ENCODE measurements at regions of chr13 and their contacts with region 1.

Region 1: GRCh38 chr13:36346222-36347083 is at the start of gene SPART:
- DNase-seq: peak; percentile 98
- H3K4me3 ChIP-seq: peak within 1 kb of the TSS; percentile 79 to 88 (median 86)
- H3K27ac ChIP-seq: peak within 1 kb of the TSS; percentile 98 to 99 (median 99)
- H3K4me1 ChIP-seq: peaks cover 5 to 45% (median 38%) of the 10 kb centered on the region in 4 donors
- H3K27me3 ChIP-seq: no peaks in the 10 kb centered on the region
- CTCF ChIP-seq: peak; percentile 98 to 99 (median 98)
- EP300 ChIP-seq: no peak
- POLR2A ChIP-seq: peak; percentile 25
- total RNA-seq, gene SPART: 95.1 to 157 (median 122) TPM

Region 2: DNA sequence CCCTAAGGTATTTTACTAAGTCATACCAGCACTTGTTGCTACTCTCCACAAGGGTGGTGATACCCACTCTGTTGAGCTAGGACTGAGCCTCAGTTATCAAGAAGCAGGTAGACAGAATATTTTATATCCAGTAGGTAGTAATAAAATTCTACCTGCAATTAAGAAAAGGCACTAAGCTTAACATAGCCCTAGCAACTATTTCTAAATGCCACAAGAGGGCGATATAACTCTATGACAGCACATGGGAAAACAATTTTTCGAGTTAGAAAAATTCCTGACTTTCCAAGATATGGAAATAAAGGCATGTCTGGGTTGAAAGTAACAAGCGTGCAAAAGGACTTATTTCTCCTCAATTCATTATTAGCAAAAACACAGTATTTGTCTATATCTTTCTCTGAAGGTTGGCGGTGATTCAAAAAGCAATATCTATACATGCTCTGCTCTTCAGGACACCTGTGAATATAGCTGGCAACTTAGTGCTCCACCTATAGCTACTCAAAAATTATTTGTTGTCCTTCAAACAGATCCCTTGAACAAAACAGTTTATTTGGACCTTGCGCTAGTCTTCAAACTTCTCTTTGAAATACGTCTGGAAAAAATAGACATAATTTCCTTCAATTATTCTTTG is 63.5 kb before region 1 on chr13:
- intact Hi-C with region 1: loop called (anchors 5 kb)
- DNase-seq: no peak
- H3K4me3 ChIP-seq: no peak overlapping the region
- H3K27ac ChIP-seq: no peak overlapping the region
- H3K4me1 ChIP-seq: peaks cover 0 to 9% (median 0%) of the 10 kb centered on the region in 4 donors
- H3K27me3 ChIP-seq: no peaks in the 10 kb centered on the region
- CTCF ChIP-seq: peak; percentile 76 to 86 (median 86)
- EP300 ChIP-seq: no peak
- POLR2A ChIP-seq: no peak

Region 3: DNA sequence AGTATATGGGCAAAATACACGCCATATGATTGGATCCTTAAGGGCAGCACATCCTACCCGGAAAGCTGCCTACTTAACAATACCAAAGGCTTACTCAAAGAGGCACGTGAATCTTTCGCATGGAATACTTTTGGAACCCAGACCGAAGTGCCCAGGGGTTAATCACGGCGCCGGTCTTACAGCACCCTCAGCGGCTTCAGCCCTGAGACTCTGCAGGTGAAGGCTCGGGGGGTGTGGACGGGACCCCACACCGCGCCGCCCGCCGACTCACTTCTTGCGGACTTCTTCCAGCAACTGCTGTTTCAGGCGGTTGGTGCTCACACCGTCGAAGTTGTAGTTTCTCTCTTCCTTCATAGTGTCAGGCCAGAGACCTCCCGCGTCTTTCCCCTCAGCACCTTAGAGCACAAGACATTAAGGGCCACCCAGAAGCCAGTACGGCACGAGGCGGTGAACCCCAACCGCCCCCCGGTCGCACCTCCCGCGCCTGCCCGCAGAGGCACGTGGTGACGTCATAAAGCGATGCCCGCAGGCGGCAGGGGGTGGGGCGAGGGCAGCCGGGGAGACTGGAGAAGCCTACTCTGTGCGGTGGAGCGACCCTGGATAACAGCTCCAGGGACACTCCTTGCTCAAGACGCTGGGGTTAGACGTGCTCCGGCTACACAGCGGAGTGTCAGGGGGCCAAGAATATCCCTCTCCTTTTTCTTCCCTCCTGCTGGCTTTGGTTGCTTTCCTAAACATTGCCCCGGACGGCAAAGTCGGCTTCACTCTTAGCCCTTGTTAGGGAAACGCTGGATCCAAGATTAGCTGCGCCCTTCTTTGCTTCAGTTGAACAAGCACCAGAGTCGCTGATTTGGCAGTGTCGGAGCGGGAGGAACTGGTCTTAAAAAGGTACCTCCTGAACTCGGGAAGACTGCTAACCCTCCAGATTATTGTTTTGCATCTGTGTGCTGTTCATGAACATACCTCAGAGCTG is 48.8 kb before region 1 on chr13 and contains the start of gene CCDC169:
- intact Hi-C with region 1: loop called (anchors 5 kb)
- DNase-seq: no peak
- H3K4me3 ChIP-seq: peak within 1 kb of the TSS; percentile 62 to 76 (median 69)
- H3K27ac ChIP-seq: peak within 1 kb of the TSS; percentile 73 to 87 (median 80)
- H3K4me1 ChIP-seq: peaks cover 5 to 20% (median 10%) of the 10 kb centered on the region in 4 donors
- H3K27me3 ChIP-seq: no peaks in the 10 kb centered on the region
- CTCF ChIP-seq: no peak
- EP300 ChIP-seq: no peak
- POLR2A ChIP-seq: no peak
- total RNA-seq, gene CCDC169: 0.42 to 1.6 (median 0.84) TPM

Region 4: DNA sequence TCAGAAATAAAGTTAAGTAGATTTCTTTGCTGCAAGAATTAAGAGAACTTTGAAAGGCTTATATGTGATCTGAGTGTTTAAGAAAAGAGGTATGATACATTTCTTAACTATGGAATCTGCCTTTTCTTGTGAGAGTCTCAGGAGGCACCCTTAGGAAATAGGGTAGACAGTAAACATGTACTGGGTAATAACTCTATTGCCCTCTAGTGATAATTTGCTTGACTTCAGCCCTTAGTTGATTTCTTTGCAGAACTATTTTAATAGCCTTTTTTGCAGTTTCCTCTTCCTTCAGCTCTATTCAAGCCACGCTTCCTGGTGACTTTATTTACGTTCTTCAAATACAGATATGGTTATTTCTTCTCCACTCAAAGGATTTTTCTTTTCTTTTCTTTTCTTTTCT is 48.8 kb after region 1 on chr13:
- intact Hi-C with region 1: loop called (anchors 2 kb)
- DNase-seq: no peak
- H3K4me3 ChIP-seq: no peak overlapping the region
- H3K27ac ChIP-seq: no peak overlapping the region
- H3K4me1 ChIP-seq: no peaks in the 10 kb centered on the region
- H3K27me3 ChIP-seq: no peaks in the 10 kb centered on the region
- CTCF ChIP-seq: peak; percentile 52 to 58 (median 57)
- EP300 ChIP-seq: no peak
- POLR2A ChIP-seq: no peak

Region 5: GRCh38 chr13:36736119-36736726 is 389.8 kb after region 1 on chr13:
- intact Hi-C with region 1: loop called (anchors 10 kb)
- DNase-seq: no peak
- H3K4me3 ChIP-seq: no peak overlapping the region
- H3K27ac ChIP-seq: no peak overlapping the region
- H3K4me1 ChIP-seq: no peaks in the 10 kb centered on the region
- H3K27me3 ChIP-seq: no peaks in the 10 kb centered on the region
- CTCF ChIP-seq: peak; percentile 42 to 68 (median 66)
- EP300 ChIP-seq: no peak
- POLR2A ChIP-seq: no peak